ENCODE measurements at regions of chr15 and their contacts with region 1.

Region 1: GRCh38 chr15:79091204-79091867 is 756 bp upstream of the RASGRF1 start:
- DNase-seq: no peak
- H3K4me3 ChIP-seq: no peak overlapping the region
- H3K27ac ChIP-seq: no peak overlapping the region
- H3K27me3 ChIP-seq: peaks cover 45% of the 10 kb centered on the region
- CTCF ChIP-seq: no peak

Region 2: GRCh38 chr15:79004336-79004735 is 87.0 kb before region 1 on chr15:
- CTCF ChIA-PET with region 1: no interaction called
- POLR2A ChIA-PET with region 1: no interaction called
- DNase-seq: peak; percentile 56
- H3K4me3 ChIP-seq: no peak overlapping the region
- H3K27ac ChIP-seq: peak overlapping the region; percentile 61
- H3K27me3 ChIP-seq: no peaks in the 10 kb centered on the region
- CTCF ChIP-seq: no peak

Region 3: GRCh38 chr15:79028411-79028964 is 62.8 kb before region 1 on chr15:
- CTCF ChIA-PET with region 1: no interaction called
- POLR2A ChIA-PET with region 1: interaction called, 11 read pairs
- DNase-seq: no peak
- H3K4me3 ChIP-seq: no peak overlapping the region
- H3K27ac ChIP-seq: no peak overlapping the region
- H3K27me3 ChIP-seq: peaks cover 16% of the 10 kb centered on the region
- CTCF ChIP-seq: peak; percentile 74